ENCODE measurements at regions of chrX and their contacts with region 1.

Region 1: DNA sequence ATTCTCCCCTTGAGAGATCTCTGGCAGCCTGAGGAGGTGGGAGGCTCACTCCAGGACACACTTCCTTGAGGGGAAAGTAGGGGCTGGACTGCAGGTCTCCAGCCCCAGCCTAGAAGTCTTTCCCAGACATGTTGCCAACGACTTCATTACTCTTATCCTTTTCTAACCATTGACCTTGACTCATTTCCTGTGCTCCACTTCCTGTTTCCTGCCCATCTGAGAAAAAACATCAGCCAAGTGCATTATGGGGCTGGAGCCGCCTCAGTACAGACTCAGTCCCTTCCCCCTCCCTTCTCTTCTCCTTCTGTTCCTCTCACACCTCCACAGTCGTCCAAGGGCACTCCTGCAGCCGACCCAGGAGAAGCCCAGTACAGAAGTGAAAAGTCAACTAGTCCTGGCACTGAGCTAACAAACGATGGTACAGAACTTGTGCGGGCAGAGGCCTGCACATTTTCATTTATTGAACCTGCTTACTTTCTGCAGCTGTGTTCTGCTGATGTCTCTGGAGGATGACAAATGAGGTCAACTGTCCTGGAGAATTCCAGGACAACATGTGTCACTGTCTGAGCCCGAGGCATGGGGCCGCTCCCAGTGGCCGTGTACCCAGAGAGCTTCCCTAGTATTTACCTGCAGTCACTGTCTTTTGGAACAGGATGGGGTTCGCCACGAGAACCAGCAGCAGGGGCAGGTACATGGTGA is 20.1 kb downstream of the GPR143 start:
- DNase-seq: peak; percentile 95
- H3K4me3 ChIP-seq: peak overlapping the region in 2 of 3 experiments; percentile 9 to 13
- H3K27ac ChIP-seq: peak overlapping the region; percentile 99
- H3K4me1 ChIP-seq: peaks cover 32% of the 10 kb centered on the region
- H3K27me3 ChIP-seq: no peaks in the 10 kb centered on the region
- CTCF ChIP-seq: no peak
- POLR2A ChIP-seq: peak; percentile 20

Region 2: GRCh38 chrX:9662148-9662547 is 83.4 kb before region 1 on chrX:
- CTCF ChIA-PET with region 1: no interaction called
- POLR2A ChIA-PET with region 1: no interaction called
- dilution Hi-C with region 1: no loop called
- intact Hi-C with region 1: loop called (anchors 1 kb)
- DNase-seq: peak; percentile 64
- H3K4me3 ChIP-seq: no peak overlapping the region
- H3K27ac ChIP-seq: peak overlapping the region; percentile 84
- H3K4me1 ChIP-seq: peaks cover 31% of the 10 kb centered on the region
- H3K27me3 ChIP-seq: no peaks in the 10 kb centered on the region
- CTCF ChIP-seq: no peak
- POLR2A ChIP-seq: no peak

Region 3: GRCh38 chrX:9770319-9770718 is 24.8 kb after region 1 on chrX:
- CTCF ChIA-PET with region 1: no interaction called
- POLR2A ChIA-PET with region 1: no interaction called
- dilution Hi-C with region 1: no loop called
- intact Hi-C with region 1: loop called (anchors 1 kb)
- DNase-seq: peak; percentile 72
- H3K4me3 ChIP-seq: no peak overlapping the region
- H3K27ac ChIP-seq: peak overlapping the region; percentile 57
- H3K4me1 ChIP-seq: peaks cover 25% of the 10 kb centered on the region
- H3K27me3 ChIP-seq: no peaks in the 10 kb centered on the region
- CTCF ChIP-seq: no peak
- POLR2A ChIP-seq: no peak

Region 4: GRCh38 chrX:9832464-9833210 is 87.1 kb after region 1 on chrX:
- CTCF ChIA-PET with region 1: no interaction called
- POLR2A ChIA-PET with region 1: no interaction called
- dilution Hi-C with region 1: no loop called
- intact Hi-C with region 1: loop called (anchors 2 kb)
- DNase-seq: peak; percentile 73
- H3K4me3 ChIP-seq: no peak overlapping the region
- H3K27ac ChIP-seq: peak overlapping the region; percentile 42
- H3K4me1 ChIP-seq: peaks cover 24% of the 10 kb centered on the region
- H3K27me3 ChIP-seq: no peaks in the 10 kb centered on the region
- CTCF ChIP-seq: no peak
- POLR2A ChIP-seq: no peak

Region 5: GRCh38 chrX:9865804-9866471 is 120.4 kb after region 1 on chrX:
- CTCF ChIA-PET with region 1: no interaction called
- POLR2A ChIA-PET with region 1: no interaction called
- dilution Hi-C with region 1: no loop called
- intact Hi-C with region 1: loop called (anchors 1 kb)
- DNase-seq: peak; percentile 60
- H3K4me3 ChIP-seq: no peak overlapping the region
- H3K27ac ChIP-seq: peak overlapping the region; percentile 69
- H3K4me1 ChIP-seq: peaks cover 23% of the 10 kb centered on the region
- H3K27me3 ChIP-seq: no peaks in the 10 kb centered on the region
- CTCF ChIP-seq: no peak
- POLR2A ChIP-seq: no peak

Region 6: DNA sequence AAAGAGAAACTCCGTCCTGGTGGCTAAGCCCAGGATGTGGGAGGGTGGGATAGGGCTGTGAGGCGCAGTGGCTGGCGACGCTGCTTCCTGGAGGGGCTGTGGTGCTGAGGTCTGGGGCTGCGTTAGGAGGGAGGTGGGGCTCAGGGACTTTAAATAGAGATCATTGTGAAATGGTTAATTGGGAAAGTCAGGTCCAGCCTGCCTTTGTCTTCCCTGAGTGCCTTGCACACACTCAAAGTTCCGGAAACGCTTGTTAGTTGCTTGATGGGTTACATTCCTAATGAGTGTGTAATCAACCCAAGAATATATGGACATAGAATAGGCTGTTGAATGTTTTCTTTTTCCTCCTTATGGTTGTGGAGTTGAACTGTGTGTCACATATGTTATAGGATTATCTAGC is 165.9 kb after region 1 on chrX:
- CTCF ChIA-PET with region 1: no interaction called
- POLR2A ChIA-PET with region 1: interaction called, 7 read pairs
- dilution Hi-C with region 1: no loop called
- intact Hi-C with region 1: loop called (anchors 1 kb)
- DNase-seq: peak; percentile 58
- H3K4me3 ChIP-seq: no peak overlapping the region
- H3K27ac ChIP-seq: peak overlapping the region; percentile 78
- H3K4me1 ChIP-seq: peaks cover 16% of the 10 kb centered on the region
- H3K27me3 ChIP-seq: no peaks in the 10 kb centered on the region
- CTCF ChIP-seq: no peak
- POLR2A ChIP-seq: no peak

Measured in endothelial cell of umbilical vein (primary cell).